ENCODE measurements at regions of chr9 and their contacts with region 1.

Region 1: GRCh38 chr9:93028448-93029006 is 30.0 kb upstream of the SUSD3 start:
- DNase-seq: peak; percentile 54 to 94 (median 68)
- ATAC-seq: peak; percentile 85
- H3K4me3 ChIP-seq: peak overlapping the region; percentile 60
- H3K4me3 Mint-ChIP-seq: peak overlapping the region; percentile 91
- H3K27ac ChIP-seq: peak overlapping the region; percentile 92 to 95
- H3K27ac Mint-ChIP-seq: peak overlapping the region; percentile 99
- H3K4me1 ChIP-seq: peaks cover 99% of the 10 kb centered on the region
- H3K4me1 Mint-ChIP-seq: peaks cover 80% of the 10 kb centered on the region
- H3K27me3 ChIP-seq: no peaks in the 10 kb centered on the region
- H3K27me3 Mint-ChIP-seq: no peaks in the 10 kb centered on the region
- CTCF ChIP-seq: no peak

Region 2: GRCh38 chr9:93003552-93004407 is 24.7 kb before region 1 on chr9:
- CTCF ChIA-PET with region 1: interaction called, 14 read pairs
- POLR2A ChIA-PET with region 1: interaction called, 22 read pairs
- intact Hi-C with region 1: loop called in 1 of 2 experiments (anchors 1 kb)
- DNase-seq: peak; percentile 47 to 85 (median 56)
- ATAC-seq: peak; percentile 77
- H3K4me3 ChIP-seq: no peak overlapping the region
- H3K4me3 Mint-ChIP-seq: peak overlapping the region; percentile 71
- H3K27ac ChIP-seq: peak overlapping the region; percentile 7 to 63
- H3K27ac Mint-ChIP-seq: peak overlapping the region; percentile 88
- H3K4me1 ChIP-seq: peaks cover 48% of the 10 kb centered on the region
- H3K4me1 Mint-ChIP-seq: peaks cover 65% of the 10 kb centered on the region
- H3K27me3 ChIP-seq: no peaks in the 10 kb centered on the region
- H3K27me3 Mint-ChIP-seq: no peaks in the 10 kb centered on the region
- CTCF ChIP-seq: peak; percentile 79

Region 3: GRCh38 chr9:93041108-93041802 is 12.7 kb after region 1 on chr9:
- CTCF ChIA-PET with region 1: interaction called, 6 read pairs
- POLR2A ChIA-PET with region 1: interaction called, 92 read pairs
- intact Hi-C with region 1: loop called in 1 of 2 experiments (anchors 1 kb)
- DNase-seq: no peak
- ATAC-seq: no peak
- H3K4me3 ChIP-seq: no peak overlapping the region
- H3K4me3 Mint-ChIP-seq: peak overlapping the region; percentile 7
- H3K27ac ChIP-seq: peak overlapping the region in 1 of 2 donors; percentile 57
- H3K27ac Mint-ChIP-seq: peak overlapping the region; percentile 85
- H3K4me1 ChIP-seq: peaks cover 65% of the 10 kb centered on the region
- H3K4me1 Mint-ChIP-seq: peaks cover 73% of the 10 kb centered on the region
- H3K27me3 ChIP-seq: no peaks in the 10 kb centered on the region
- H3K27me3 Mint-ChIP-seq: no peaks in the 10 kb centered on the region
- CTCF ChIP-seq: no peak

Region 4: DNA sequence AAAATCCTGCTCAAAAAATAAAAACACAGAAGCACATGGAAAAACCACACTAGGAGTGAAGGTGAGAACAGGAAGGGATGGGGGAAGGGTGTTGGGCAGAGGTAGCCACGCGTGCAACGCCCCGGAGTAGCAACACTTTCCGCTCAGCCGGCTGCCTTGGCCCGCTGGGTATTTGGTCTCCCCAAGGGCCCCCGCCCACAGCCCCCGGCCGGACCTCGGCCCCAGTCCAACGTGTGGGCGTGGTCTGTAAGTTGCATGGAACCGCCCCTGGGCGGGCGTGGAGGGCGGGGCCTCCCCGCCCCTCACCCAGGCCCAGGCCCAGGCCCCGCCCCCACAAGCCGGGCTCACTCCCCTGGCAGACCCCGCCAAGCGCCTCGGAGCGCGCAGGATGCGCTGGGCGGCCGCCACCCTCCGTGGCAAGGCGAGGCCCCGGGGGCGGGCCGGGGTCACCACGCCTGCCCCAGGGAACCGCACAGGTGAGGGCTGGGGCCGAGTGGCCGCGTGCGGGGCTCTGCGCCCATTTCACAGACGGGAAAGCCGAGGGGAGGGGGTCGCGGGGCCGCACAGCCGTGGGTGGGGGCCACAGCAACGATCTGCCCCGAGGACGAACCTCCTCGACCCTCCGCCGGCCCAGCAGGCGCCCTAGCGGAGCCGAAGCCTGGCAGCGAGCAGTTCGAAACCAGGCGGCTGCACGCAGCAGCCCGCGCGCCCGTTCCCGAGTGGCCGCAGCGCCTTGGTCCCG is 30.0 kb after region 1 on chr9 and contains the start of gene SUSD3:
- CTCF ChIA-PET with region 1: interaction called, 8 read pairs
- POLR2A ChIA-PET with region 1: interaction called, 163 read pairs
- intact Hi-C with region 1: loop called (anchors 1 to 2 kb)
- DNase-seq: peak; percentile 46 to 86 (median 69)
- ATAC-seq: peak; percentile 62
- H3K4me3 ChIP-seq: peak within 1 kb of the TSS; percentile 91
- H3K4me3 Mint-ChIP-seq: peak within 1 kb of the TSS; percentile 96
- H3K27ac ChIP-seq: peak within 1 kb of the TSS; percentile 83 to 90
- H3K27ac Mint-ChIP-seq: peak within 1 kb of the TSS; percentile 100
- H3K4me1 ChIP-seq: peaks cover 74% of the 10 kb centered on the region
- H3K4me1 Mint-ChIP-seq: peaks cover 74% of the 10 kb centered on the region
- H3K27me3 ChIP-seq: no peaks in the 10 kb centered on the region
- H3K27me3 Mint-ChIP-seq: no peaks in the 10 kb centered on the region
- CTCF ChIP-seq: no peak
- total RNA-seq, gene SUSD3: 33.9 to 35.6 TPM

Region 5: GRCh38 chr9:93095205-93096130 is 66.9 kb after region 1 on chr9:
- CTCF ChIA-PET with region 1: no interaction called
- POLR2A ChIA-PET with region 1: interaction called, 29 read pairs
- intact Hi-C with region 1: loop called in 1 of 2 experiments (anchors 1 kb)
- DNase-seq: peak; percentile 100
- ATAC-seq: peak; percentile 81
- H3K4me3 ChIP-seq: peak overlapping the region; percentile 62
- H3K4me3 Mint-ChIP-seq: peak overlapping the region; percentile 95
- H3K27ac ChIP-seq: peak overlapping the region; percentile 94 to 95
- H3K27ac Mint-ChIP-seq: peak overlapping the region; percentile 99
- H3K4me1 ChIP-seq: peaks cover 75% of the 10 kb centered on the region
- H3K4me1 Mint-ChIP-seq: peaks cover 78% of the 10 kb centered on the region
- H3K27me3 ChIP-seq: no peaks in the 10 kb centered on the region
- H3K27me3 Mint-ChIP-seq: no peaks in the 10 kb centered on the region
- CTCF ChIP-seq: no peak